ENCODE measurements at regions of chr3 and their contacts with region 1.

Region 1: GRCh38 chr3:193564012-193564411 is 9.3 kb upstream of the ATP13A4 start:
- DNase-seq: no peak
- H3K4me3 ChIP-seq: no peak overlapping the region
- H3K27ac ChIP-seq: no peak overlapping the region
- H3K4me1 ChIP-seq: peaks cover 6% of the 10 kb centered on the region
- H3K27me3 ChIP-seq: no peaks in the 10 kb centered on the region
- CTCF ChIP-seq: peak; percentile 35

Region 2: DNA sequence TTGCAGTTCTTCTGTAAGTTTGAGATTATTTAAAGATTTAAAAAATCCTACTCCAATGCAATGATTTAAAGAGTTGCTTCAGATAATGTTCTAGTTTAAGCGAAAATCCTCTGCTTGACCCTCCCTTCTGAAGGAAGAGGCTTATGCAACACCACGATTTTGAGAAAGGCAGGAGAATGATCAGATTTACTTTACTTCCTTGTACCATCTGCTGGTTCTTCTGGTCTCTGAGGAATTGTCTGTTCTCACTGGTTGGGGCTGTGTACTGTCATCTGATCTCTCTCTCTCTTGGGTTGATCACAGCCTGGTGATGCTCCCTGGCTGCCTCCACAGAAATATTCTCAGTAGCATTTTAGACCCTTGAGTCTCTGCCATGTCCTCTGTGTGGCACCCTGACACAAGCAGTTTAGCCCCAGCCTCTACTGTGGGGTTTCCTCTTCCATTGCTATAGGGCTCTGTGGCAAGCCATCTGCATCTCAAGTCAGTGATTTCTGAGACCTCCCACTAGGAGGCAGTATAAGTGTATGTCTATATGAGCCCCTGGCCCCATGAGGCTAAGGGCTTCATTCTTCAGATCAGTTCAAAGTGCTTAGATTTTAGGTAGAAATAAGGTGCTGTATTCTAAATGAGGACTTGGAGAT is 373.7 kb before region 1 on chr3:
- intact Hi-C with region 1: loop called (anchors 10 kb)
- DNase-seq: no peak
- H3K4me3 ChIP-seq: no peak overlapping the region
- H3K27ac ChIP-seq: no peak overlapping the region
- H3K4me1 ChIP-seq: no peaks in the 10 kb centered on the region
- H3K27me3 ChIP-seq: peaks cover 12% of the 10 kb centered on the region
- CTCF ChIP-seq: peak; percentile 53

Region 3: GRCh38 chr3:193640165-193640715 is 76.2 kb after region 1 on chr3:
- intact Hi-C with region 1: no loop called
- DNase-seq: no peak
- H3K4me3 ChIP-seq: no peak overlapping the region
- H3K27ac ChIP-seq: no peak overlapping the region
- H3K4me1 ChIP-seq: peaks cover 16% of the 10 kb centered on the region
- H3K27me3 ChIP-seq: no peaks in the 10 kb centered on the region
- CTCF ChIP-seq: no peak

Region 4: GRCh38 chr3:193768070-193768394 is 204.0 kb after region 1 on chr3:
- intact Hi-C with region 1: no loop called
- DNase-seq: no peak
- H3K4me3 ChIP-seq: no peak overlapping the region
- H3K27ac ChIP-seq: no peak overlapping the region
- H3K4me1 ChIP-seq: no peaks in the 10 kb centered on the region
- H3K27me3 ChIP-seq: peaks cover 6% of the 10 kb centered on the region
- CTCF ChIP-seq: no peak

Region 5: GRCh38 chr3:193842029-193842798 is 278.2 kb after region 1 on chr3:
- intact Hi-C with region 1: no loop called
- DNase-seq: no peak
- H3K4me3 ChIP-seq: no peak overlapping the region
- H3K27ac ChIP-seq: no peak overlapping the region
- H3K4me1 ChIP-seq: peaks cover 7% of the 10 kb centered on the region
- H3K27me3 ChIP-seq: peaks cover 6% of the 10 kb centered on the region
- CTCF ChIP-seq: no peak